CD8-positive, alpha-beta T cell (primary cell): ENCODE measurements at regions of chr6 and their contacts with region 1.

Region 1: GRCh38 chr6:25263657-25264056 is 15.5 kb upstream of the CARMIL1 start:
- DNase-seq: no peak
- ATAC-seq: no peak
- H3K4me3 ChIP-seq: no peak overlapping the region
- H3K4me3 Mint-ChIP-seq: no peak overlapping the region
- H3K27ac ChIP-seq: no peak overlapping the region
- H3K27ac Mint-ChIP-seq: no peak overlapping the region
- H3K4me1 ChIP-seq: no peaks in the 10 kb centered on the region
- H3K4me1 Mint-ChIP-seq: peaks cover 2% of the 10 kb centered on the region
- H3K27me3 ChIP-seq: no peaks in the 10 kb centered on the region
- H3K27me3 Mint-ChIP-seq: peaks cover 2% of the 10 kb centered on the region
- CTCF ChIP-seq: no peak

Region 2: DNA sequence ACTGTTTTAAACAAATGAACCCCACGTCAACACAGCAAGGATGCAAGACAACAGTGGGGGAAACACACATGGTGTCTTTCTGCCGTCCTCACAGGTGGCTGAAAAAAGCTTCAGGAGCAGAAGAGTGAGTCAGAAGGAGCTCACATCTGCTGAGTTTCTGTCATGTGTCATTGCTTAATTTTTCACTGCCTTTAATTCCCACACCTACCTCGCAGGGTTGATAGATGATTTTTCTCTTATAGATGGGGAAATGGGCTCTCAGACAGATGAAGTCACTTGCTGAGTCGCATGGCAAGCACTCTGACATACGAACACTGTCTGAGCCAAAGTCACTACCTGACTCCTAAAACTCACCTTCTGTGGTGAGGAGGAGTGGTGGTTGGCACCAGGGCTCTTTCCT is 12.8 kb before region 1 on chr6:
- CTCF ChIA-PET with region 1: interaction called, 36 read pairs
- POLR2A ChIA-PET with region 1: no interaction called
- intact Hi-C with region 1: no loop called
- DNase-seq: no peak
- ATAC-seq: no peak
- H3K4me3 ChIP-seq: no peak overlapping the region
- H3K4me3 Mint-ChIP-seq: no peak overlapping the region
- H3K27ac ChIP-seq: no peak overlapping the region
- H3K27ac Mint-ChIP-seq: no peak overlapping the region
- H3K4me1 ChIP-seq: no peaks in the 10 kb centered on the region
- H3K4me1 Mint-ChIP-seq: no peaks in the 10 kb centered on the region
- H3K27me3 ChIP-seq: no peaks in the 10 kb centered on the region
- H3K27me3 Mint-ChIP-seq: peaks cover 13% of the 10 kb centered on the region
- CTCF ChIP-seq: no peak

Region 3: DNA sequence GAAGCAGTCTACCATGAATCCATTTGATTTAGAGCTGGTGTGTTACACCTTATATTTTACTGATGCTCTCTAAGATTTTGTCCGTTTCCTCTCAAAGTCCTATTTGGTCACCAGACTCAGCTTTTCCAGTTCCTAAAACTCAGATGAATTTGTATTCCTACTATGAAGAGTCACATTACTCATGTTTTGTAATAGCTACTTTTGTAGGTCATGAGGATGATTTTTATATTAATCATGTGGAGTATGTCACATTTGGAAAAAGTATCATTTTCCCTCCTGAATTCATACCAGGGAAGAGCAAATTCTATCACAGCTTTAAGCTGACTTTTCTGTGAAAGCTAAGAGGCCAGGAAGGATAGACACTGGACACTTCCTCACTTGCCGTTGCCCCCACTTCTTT is 247.7 kb after region 1 on chr6:
- CTCF ChIA-PET with region 1: interaction called, 10 read pairs
- POLR2A ChIA-PET with region 1: no interaction called
- intact Hi-C with region 1: no loop called
- DNase-seq: no peak
- ATAC-seq: no peak
- H3K4me3 ChIP-seq: no peak overlapping the region
- H3K4me3 Mint-ChIP-seq: no peak overlapping the region
- H3K27ac ChIP-seq: no peak overlapping the region
- H3K27ac Mint-ChIP-seq: no peak overlapping the region
- H3K4me1 ChIP-seq: no peaks in the 10 kb centered on the region
- H3K4me1 Mint-ChIP-seq: no peaks in the 10 kb centered on the region
- H3K27me3 ChIP-seq: no peaks in the 10 kb centered on the region
- H3K27me3 Mint-ChIP-seq: no peaks in the 10 kb centered on the region
- CTCF ChIP-seq: no peak

Region 4: GRCh38 chr6:25550631-25551030 is 287.0 kb after region 1 on chr6:
- CTCF ChIA-PET with region 1: interaction called, 52 read pairs
- POLR2A ChIA-PET with region 1: no interaction called
- intact Hi-C with region 1: no loop called
- DNase-seq: no peak
- ATAC-seq: no peak
- H3K4me3 ChIP-seq: no peak overlapping the region
- H3K4me3 Mint-ChIP-seq: no peak overlapping the region
- H3K27ac ChIP-seq: no peak overlapping the region
- H3K27ac Mint-ChIP-seq: no peak overlapping the region
- H3K4me1 ChIP-seq: no peaks in the 10 kb centered on the region
- H3K4me1 Mint-ChIP-seq: no peaks in the 10 kb centered on the region
- H3K27me3 ChIP-seq: no peaks in the 10 kb centered on the region
- H3K27me3 Mint-ChIP-seq: no peaks in the 10 kb centered on the region
- CTCF ChIP-seq: no peak

Region 5: GRCh38 chr6:25601800-25602673 is 338.4 kb after region 1 on chr6:
- CTCF ChIA-PET with region 1: interaction called, 15 read pairs
- POLR2A ChIA-PET with region 1: no interaction called
- intact Hi-C with region 1: loop called (anchors 1 to 2 kb)
- DNase-seq: peak in 2 of 9 experiments; percentile 59 to 72
- ATAC-seq: no peak
- H3K4me3 ChIP-seq: no peak overlapping the region
- H3K4me3 Mint-ChIP-seq: no peak overlapping the region
- H3K27ac ChIP-seq: no peak overlapping the region
- H3K27ac Mint-ChIP-seq: no peak overlapping the region
- H3K4me1 ChIP-seq: no peaks in the 10 kb centered on the region
- H3K4me1 Mint-ChIP-seq: peaks cover 3% of the 10 kb centered on the region
- H3K27me3 ChIP-seq: no peaks in the 10 kb centered on the region
- H3K27me3 Mint-ChIP-seq: no peaks in the 10 kb centered on the region
- CTCF ChIP-seq: peak; percentile 81

Region 6: GRCh38 chr6:26156076-26156849 is 892.6 kb after region 1 on chr6:
- CTCF ChIA-PET with region 1: no interaction called
- POLR2A ChIA-PET with region 1: no interaction called
- intact Hi-C with region 1: no loop called
- DNase-seq: peak; percentile 77 to 96 (median 84)
- ATAC-seq: peak; percentile 39
- H3K4me3 ChIP-seq: peak overlapping the region; percentile 51 to 86
- H3K4me3 Mint-ChIP-seq: peak overlapping the region; percentile 94
- H3K27ac ChIP-seq: peak overlapping the region; percentile 85 to 98
- H3K27ac Mint-ChIP-seq: peak overlapping the region; percentile 98
- H3K4me1 ChIP-seq: peaks cover 20% of the 10 kb centered on the region
- H3K4me1 Mint-ChIP-seq: peaks cover 34% of the 10 kb centered on the region
- H3K27me3 ChIP-seq: no peaks in the 10 kb centered on the region
- H3K27me3 Mint-ChIP-seq: no peaks in the 10 kb centered on the region
- CTCF ChIP-seq: no peak